ENCODE measurements at regions of chr3 and their contacts with region 1.

Region 1: DNA sequence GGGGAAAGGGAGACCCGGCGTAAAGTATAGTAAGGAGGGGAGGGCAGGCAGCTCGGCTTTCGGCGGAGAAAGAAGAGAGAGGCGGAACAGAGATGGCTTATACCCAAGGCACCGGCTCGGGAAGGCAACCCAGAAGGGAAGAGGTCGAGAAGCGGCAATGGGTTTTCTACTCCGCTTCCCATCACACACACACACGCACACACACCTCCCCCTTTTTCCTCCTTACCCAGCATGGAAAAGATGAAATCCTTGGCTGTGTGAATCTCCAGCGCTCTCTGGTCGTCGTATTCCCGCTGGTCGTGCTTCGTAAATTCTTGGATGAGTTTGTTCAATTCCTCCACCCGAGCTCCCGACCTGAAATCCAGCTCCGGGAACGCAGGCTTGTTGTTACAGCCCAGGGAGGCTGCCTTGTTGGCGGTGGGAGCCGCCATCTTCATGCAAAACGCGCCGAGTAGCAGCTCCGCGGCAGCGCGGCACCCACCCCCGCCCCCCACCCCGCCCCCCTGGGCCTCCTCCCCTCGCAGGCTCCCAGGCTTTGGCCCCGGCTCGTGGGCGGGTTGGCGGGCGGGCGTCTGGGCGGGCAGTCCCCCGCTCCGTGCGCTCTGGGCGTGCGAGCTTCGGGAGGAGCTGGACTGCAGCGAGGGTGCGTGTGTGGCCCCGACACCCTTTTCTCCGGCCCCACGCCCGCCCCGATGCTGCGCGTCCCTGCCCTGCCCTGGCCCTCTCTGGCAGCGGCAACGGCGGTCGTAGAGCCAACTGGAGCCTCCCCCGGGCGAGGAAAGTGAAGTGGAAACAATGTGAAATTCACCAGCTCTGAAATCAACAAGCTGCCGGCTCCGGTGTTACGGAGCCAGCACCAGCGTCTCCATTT is at the start of gene MB21D2:
- DNase-seq: no peak
- ATAC-seq: peak; percentile 77
- H3K4me3 ChIP-seq: peak within 1 kb of the TSS; percentile 85
- H3K27ac ChIP-seq: peak within 1 kb of the TSS; percentile 73
- H3K4me1 ChIP-seq: no peaks in the 10 kb centered on the region
- H3K27me3 ChIP-seq: no peaks in the 10 kb centered on the region
- CTCF ChIP-seq: 0 out of 6 replicates have a peak, but pooled peaks of 1 of the 3 experiments have one; percentile 0
- EP300 ChIP-seq: no peak
- POLR2A ChIP-seq: peak; percentile 83
- RAD21 ChIP-seq: 0 out of 2 replicates have a peak, but pooled peaks have one; percentile 18
- polyA plus RNA-seq, gene MB21D2: 7.9 to 21.2 TPM

Region 2: GRCh38 chr3:192825657-192826200 is 91.9 kb before region 1 on chr3:
- CTCF ChIA-PET with region 1: interaction called, 27 read pairs
- POLR2A ChIA-PET with region 1: interaction called, 9 read pairs
- RAD21 ChIA-PET with region 1: interaction called, 425 read pairs
- SMC1A ChIA-PET with region 1: interaction called, 472 read pairs
- in situ Hi-C with region 1: no loop called
- intact Hi-C with region 1: loop called (anchors 5 kb)
- DNase-seq: no peak
- ATAC-seq: peak; percentile 76
- H3K4me3 ChIP-seq: no peak overlapping the region
- H3K27ac ChIP-seq: no peak overlapping the region
- H3K4me1 ChIP-seq: peaks cover 20% of the 10 kb centered on the region
- H3K27me3 ChIP-seq: no peaks in the 10 kb centered on the region
- CTCF ChIP-seq: peak in 2 of 3 experiments; percentile 0 to 20; a peak in 1 of 6 replicates
- EP300 ChIP-seq: peak; percentile 83 to 95; a peak in 3 of 4 replicates
- POLR2A ChIP-seq: no peak
- RAD21 ChIP-seq: 0 out of 2 replicates have a peak, but pooled peaks have one; percentile 14

Region 3: DNA sequence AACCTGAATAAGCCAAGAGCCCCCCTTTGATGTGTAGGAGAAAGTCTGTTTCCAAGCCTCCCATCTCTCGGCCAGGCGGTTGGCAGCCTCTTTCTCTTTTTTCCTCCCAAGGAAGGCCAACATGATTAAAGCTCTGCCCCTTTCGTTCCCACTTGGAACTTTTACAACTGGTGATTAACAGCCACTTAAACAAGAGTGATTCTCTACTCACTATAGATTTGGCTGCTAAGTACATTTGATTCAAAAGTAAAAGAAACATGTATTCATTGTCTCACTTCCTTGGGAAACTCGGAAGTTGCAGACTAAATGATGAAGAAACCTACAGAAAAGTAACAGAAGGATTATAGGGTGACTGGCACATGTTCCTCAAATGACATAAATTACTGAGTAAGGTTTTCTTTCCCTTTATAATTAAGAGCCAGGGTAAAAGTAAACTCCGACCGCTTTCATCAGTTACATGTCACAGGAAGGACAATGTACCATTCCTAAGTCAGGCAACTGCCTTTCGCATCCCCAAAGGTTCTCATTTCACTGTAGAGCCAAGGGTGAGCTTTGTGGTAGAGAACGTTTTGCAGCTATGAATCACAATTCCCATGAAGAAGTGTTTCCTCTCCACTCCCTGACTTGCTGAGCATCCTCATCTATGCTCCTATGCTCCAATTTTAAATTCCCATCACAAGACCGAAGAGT is 72.7 kb before region 1 on chr3:
- CTCF ChIA-PET with region 1: interaction called, 47 read pairs
- POLR2A ChIA-PET with region 1: interaction called, 32 read pairs
- RAD21 ChIA-PET with region 1: interaction called, 123 read pairs
- SMC1A ChIA-PET with region 1: interaction called, 108 read pairs
- in situ Hi-C with region 1: no loop called
- intact Hi-C with region 1: loop called (anchors 5 kb)
- DNase-seq: no peak
- ATAC-seq: no peak
- H3K4me3 ChIP-seq: no peak overlapping the region
- H3K27ac ChIP-seq: peak overlapping the region; percentile 61
- H3K4me1 ChIP-seq: peaks cover 51% of the 10 kb centered on the region
- H3K27me3 ChIP-seq: no peaks in the 10 kb centered on the region
- CTCF ChIP-seq: no peak
- EP300 ChIP-seq: no peak
- POLR2A ChIP-seq: no peak
- RAD21 ChIP-seq: no peak

Region 4: DNA sequence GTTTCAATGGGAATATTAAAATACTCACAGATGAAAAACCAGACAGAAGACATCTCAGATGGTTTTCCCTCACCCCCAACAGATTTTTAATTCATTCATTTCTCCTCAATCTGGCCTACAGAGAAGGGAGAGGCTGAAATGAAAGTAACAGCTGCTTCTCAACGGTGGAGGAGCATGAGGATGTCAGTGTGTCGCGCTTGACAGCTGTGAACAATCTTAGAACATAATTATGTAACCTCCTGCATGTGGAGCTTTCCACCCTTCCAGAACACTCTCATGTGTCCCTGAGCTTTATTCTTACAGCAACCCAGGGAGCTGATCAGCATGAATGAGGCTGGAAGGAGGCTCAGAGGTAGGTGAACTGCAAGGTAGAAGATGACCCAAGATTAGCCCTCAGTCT is 52.7 kb before region 1 on chr3:
- CTCF ChIA-PET with region 1: interaction called, 9 read pairs
- POLR2A ChIA-PET with region 1: no interaction called
- RAD21 ChIA-PET with region 1: interaction called, 25 read pairs
- SMC1A ChIA-PET with region 1: interaction called, 19 read pairs
- in situ Hi-C with region 1: no loop called
- intact Hi-C with region 1: no loop called
- DNase-seq: no peak
- ATAC-seq: peak; percentile 70
- H3K4me3 ChIP-seq: no peak overlapping the region
- H3K27ac ChIP-seq: peak overlapping the region; percentile 80
- H3K4me1 ChIP-seq: peaks cover 42% of the 10 kb centered on the region
- H3K27me3 ChIP-seq: no peaks in the 10 kb centered on the region
- CTCF ChIP-seq: no peak
- EP300 ChIP-seq: no peak
- POLR2A ChIP-seq: no peak
- RAD21 ChIP-seq: no peak

Region 5: DNA sequence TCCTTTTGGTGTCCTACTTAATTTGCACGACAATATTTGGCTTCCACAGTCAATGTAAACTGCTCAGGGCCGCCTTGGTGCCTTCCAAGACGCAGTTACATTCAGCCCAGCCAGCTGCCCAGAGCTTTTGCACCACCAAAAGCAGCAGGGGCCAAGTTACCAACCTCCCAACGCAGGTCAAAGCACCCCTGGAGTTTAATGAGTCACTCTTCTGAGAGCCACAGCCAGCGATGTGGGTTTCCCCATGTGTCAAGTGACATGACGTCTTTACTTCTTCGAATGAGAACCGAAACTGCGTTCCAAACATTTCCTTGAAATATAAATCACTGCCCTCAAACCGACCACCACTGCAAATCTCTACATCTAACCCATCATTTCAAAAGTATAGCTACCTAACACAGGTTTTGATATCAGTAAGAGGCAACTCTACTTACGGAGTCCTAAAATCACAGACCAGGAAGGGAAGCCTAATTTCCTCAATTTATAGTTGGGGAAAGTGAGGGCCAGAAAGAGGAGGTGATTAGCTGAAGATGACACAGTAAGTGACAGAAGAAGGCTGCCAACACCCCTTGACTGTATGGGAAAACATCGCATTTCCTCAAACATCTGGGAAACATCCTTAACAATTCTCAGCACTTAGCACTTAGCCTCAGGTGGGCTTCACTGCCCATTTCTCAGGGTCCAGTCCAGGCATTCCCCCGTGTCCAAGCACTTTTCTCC is 24.5 kb before region 1 on chr3:
- CTCF ChIA-PET with region 1: interaction called, 148 read pairs
- POLR2A ChIA-PET with region 1: interaction called, 43 read pairs
- RAD21 ChIA-PET with region 1: interaction called, 146 read pairs
- SMC1A ChIA-PET with region 1: interaction called, 245 read pairs
- in situ Hi-C with region 1: no loop called
- intact Hi-C with region 1: loop called (anchors 1 kb)
- DNase-seq: peak; percentile 94
- ATAC-seq: peak; percentile 93
- H3K4me3 ChIP-seq: no peak overlapping the region; the same call in 1 of the 2 replicates
- H3K27ac ChIP-seq: peak overlapping the region; percentile 96
- H3K4me1 ChIP-seq: peaks cover 74% of the 10 kb centered on the region
- H3K27me3 ChIP-seq: no peaks in the 10 kb centered on the region
- CTCF ChIP-seq: no peak
- EP300 ChIP-seq: peak; percentile 98 to 99
- POLR2A ChIP-seq: peak; percentile 55
- RAD21 ChIP-seq: peak; percentile 25; the same call in 1 of the 2 replicates

Region 6: GRCh38 chr3:192906949-192907348 is 10.7 kb before region 1 on chr3:
- CTCF ChIA-PET with region 1: interaction called, 10 read pairs
- POLR2A ChIA-PET with region 1: interaction called, 10 read pairs
- RAD21 ChIA-PET with region 1: interaction called, 19 read pairs
- SMC1A ChIA-PET with region 1: interaction called, 26 read pairs
- in situ Hi-C with region 1: no loop called
- intact Hi-C with region 1: no loop called
- DNase-seq: no peak
- ATAC-seq: peak; percentile 38
- H3K4me3 ChIP-seq: no peak overlapping the region
- H3K27ac ChIP-seq: no peak overlapping the region
- H3K4me1 ChIP-seq: peaks cover 3% of the 10 kb centered on the region
- H3K27me3 ChIP-seq: no peaks in the 10 kb centered on the region
- CTCF ChIP-seq: no peak
- EP300 ChIP-seq: no peak
- POLR2A ChIP-seq: no peak
- RAD21 ChIP-seq: no peak

Region 7: DNA sequence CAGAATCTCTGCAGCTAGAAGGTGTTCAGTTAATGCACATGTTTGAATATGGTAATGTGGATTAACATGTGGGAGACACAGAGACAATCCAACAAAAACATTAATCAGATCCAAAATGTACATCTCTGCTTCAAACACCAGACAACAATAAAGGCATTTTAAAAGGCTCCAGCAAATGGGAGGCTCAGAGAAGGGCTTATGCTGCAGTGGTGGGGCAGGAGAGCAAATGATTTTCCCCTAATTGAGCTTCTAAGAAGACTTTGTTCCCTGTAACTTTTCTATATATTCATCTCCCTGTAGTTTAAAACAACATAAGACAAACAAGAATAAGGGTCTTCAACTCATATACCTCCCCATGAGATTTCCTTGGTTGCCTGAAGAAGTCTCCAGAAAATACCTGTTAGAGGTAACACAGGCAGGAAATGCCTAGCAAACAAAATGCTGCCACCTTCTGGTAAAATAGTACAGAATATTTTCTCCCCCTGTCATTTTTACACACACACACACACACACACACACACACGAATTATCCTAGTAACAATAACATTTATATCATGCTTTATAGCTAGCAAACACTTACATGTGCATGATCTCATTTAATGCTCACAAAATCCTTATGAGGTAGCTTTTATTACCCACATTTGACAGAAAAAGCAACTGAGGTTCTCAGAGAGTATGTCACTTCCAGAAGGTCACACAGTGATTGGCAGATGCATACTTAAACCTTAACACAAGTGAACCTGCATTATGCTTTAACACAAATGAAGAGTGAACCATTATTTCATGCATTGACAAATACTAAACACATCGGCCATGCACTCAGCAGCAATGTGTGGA is 123.4 kb after region 1 on chr3:
- CTCF ChIA-PET with region 1: interaction called, 30 read pairs
- POLR2A ChIA-PET with region 1: no interaction called
- RAD21 ChIA-PET with region 1: interaction called, 19 read pairs
- SMC1A ChIA-PET with region 1: interaction called, 25 read pairs
- in situ Hi-C with region 1: no loop called
- intact Hi-C with region 1: loop called (anchors 2 kb)
- DNase-seq: peak; percentile 5
- ATAC-seq: peak; percentile 83
- H3K4me3 ChIP-seq: no peak overlapping the region
- H3K27ac ChIP-seq: no peak overlapping the region
- H3K4me1 ChIP-seq: no peaks in the 10 kb centered on the region
- H3K27me3 ChIP-seq: no peaks in the 10 kb centered on the region
- CTCF ChIP-seq: peak; percentile 22 to 56 (median 38); a peak in 5 of 6 replicates
- EP300 ChIP-seq: no peak
- POLR2A ChIP-seq: no peak
- RAD21 ChIP-seq: peak; percentile 84